MCF 10A (cell line): ENCODE measurements at regions of chr5 and their contacts with region 1.

Region 1: DNA sequence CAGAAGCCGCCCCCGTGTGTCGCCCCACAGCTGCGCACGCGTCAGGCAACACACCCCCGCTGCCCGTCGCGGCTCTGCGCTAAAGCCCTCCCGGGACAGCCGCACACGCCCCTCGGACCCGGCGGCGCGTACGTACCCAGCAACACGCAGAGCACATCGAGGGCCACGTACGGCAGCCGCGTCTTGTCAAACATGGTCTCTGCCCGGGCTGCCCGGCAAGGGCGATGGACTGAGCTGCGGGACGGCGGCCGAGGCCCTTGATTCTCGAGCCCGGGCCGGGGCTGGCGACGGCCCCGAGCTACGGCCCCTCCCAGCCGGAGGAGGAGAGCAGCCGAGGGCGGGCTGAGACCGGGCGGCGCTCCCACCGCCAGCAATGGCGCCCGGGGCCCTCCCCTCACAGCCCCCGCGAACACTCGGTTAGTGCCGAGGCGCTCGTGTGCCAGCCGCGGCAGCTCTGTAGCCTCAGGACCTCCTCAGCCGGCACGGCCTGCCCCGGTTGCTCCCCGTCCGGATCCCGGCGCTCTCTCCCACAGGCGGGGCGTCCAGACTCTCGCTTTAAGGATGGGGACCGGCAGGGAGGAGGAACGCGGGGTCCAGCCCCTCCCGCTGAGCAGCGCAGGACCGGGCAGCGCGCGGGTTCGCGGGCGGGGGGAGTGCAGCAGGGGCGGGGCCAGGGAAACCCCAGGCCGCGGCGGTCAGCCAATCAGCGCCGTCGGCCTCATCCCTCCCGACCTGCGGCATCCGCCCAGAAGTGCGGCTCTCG is at the start of gene PLPP1:
- DNase-seq: peak; percentile 82
- H3K4me3 Mint-ChIP-seq: peak within 1 kb of the TSS; percentile 76
- H3K27ac Mint-ChIP-seq: peak within 1 kb of the TSS; percentile 59
- H3K4me1 Mint-ChIP-seq: peaks cover 6% of the 10 kb centered on the region
- H3K27me3 Mint-ChIP-seq: no peaks in the 10 kb centered on the region
- CTCF ChIP-seq: no peak
- total RNA-seq, gene PLPP1: 7.5 and 10.4 TPM in 2 replicates

Region 2: DNA sequence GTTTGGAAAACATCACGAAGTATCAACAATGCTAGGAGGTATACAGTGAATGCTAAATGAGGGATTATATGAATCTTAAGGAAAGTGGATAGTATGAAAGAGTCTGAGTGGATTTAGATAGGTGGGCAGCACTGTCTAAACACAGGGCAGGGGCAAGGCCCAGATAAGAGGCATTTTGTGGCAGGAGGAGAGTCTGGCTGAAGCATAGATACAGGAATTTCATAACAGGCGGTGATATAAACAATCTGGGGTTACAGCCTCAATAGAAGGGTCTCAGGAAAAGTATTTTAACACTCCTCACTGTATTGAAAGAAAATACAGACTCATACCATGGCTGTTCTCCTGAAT is 96.8 kb before region 1 on chr5:
- CTCF ChIA-PET with region 1: no interaction called
- POLR2A ChIA-PET with region 1: no interaction called
- intact Hi-C with region 1: loop called (anchors 1 kb)
- DNase-seq: no peak
- H3K4me3 Mint-ChIP-seq: peak overlapping the region; percentile 67
- H3K27ac Mint-ChIP-seq: peak overlapping the region; percentile 99
- H3K4me1 Mint-ChIP-seq: peaks cover 17% of the 10 kb centered on the region
- H3K27me3 Mint-ChIP-seq: no peaks in the 10 kb centered on the region
- CTCF ChIP-seq: no peak

Region 3: DNA sequence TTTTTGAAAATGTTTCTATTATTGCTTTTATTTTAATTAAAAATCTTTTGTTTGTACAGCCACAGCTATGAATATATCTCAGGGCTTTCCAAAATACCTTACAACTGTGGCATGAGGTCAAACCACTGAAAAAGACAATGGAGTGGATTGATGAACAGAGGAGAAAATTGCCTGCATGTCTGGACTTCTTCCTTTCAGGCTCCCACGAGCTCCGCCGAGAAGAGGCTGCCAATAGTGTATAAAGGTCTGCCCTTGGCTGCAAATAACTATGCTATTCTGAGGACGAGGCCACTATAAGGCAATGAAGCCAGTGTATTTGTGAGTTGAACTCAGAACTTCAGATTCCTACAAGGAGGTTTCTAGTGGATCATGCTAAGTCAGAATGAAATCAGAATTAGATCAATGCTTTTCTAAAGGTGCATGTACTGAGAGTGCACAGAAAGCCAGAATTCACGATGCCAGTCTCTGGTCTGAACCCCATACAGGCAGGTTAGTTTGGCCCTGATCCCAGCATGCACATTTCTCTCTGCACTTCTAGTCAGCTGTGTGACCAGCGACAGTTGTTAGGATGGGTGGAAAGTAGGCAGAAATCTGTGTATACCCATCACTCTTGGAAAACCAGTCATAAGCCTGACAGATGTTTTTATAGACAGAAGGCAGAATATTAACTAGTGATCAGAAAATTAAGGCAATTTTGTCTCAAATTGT is 42.9 kb after region 1 on chr5:
- CTCF ChIA-PET with region 1: no interaction called
- POLR2A ChIA-PET with region 1: no interaction called
- intact Hi-C with region 1: no loop called
- DNase-seq: peak; percentile 16
- H3K4me3 Mint-ChIP-seq: no peak overlapping the region
- H3K27ac Mint-ChIP-seq: no peak overlapping the region
- H3K4me1 Mint-ChIP-seq: no peaks in the 10 kb centered on the region
- H3K27me3 Mint-ChIP-seq: no peaks in the 10 kb centered on the region
- CTCF ChIP-seq: no peak

Region 4: DNA sequence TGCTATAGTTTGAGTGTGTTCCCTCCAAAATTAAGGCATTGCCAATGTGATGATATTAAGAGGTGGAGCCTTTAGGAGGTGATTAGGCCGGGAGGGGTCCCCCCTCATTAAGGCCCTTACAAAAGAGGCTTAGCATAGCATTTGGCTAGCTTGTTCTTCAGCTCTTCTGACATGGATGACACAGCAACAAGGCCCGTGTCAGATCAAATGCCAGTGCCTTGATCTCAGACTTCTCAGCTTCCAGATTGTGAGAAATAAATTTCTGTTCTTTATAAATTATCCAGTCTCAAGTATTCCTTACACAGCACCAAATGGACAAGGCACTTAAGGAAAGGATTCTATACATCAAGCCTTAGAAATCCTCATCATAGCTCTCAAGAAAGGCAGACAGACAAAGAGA is 145.7 kb after region 1 on chr5:
- CTCF ChIA-PET with region 1: no interaction called
- POLR2A ChIA-PET with region 1: no interaction called
- intact Hi-C with region 1: loop called (anchors 10 kb)
- DNase-seq: no peak
- H3K4me3 Mint-ChIP-seq: no peak overlapping the region
- H3K27ac Mint-ChIP-seq: peak overlapping the region; percentile 64
- H3K4me1 Mint-ChIP-seq: peaks cover 13% of the 10 kb centered on the region
- H3K27me3 Mint-ChIP-seq: no peaks in the 10 kb centered on the region
- CTCF ChIP-seq: no peak

Region 5: GRCh38 chr5:56088967-56089829 is 554.6 kb after region 1 on chr5:
- CTCF ChIA-PET with region 1: no interaction called
- POLR2A ChIA-PET with region 1: no interaction called
- intact Hi-C with region 1: no loop called
- DNase-seq: no peak
- H3K4me3 Mint-ChIP-seq: no peak overlapping the region
- H3K27ac Mint-ChIP-seq: no peak overlapping the region
- H3K4me1 Mint-ChIP-seq: peaks cover 15% of the 10 kb centered on the region
- H3K27me3 Mint-ChIP-seq: no peaks in the 10 kb centered on the region
- CTCF ChIP-seq: no peak